Dendritic cell treated with granulocyte-macrophage colony-stimulating factor and Interleukin-4, amounts not matched to agents 40 ng/mL and 50 ng/mL, for 4 days (primary cell): ENCODE measurements at regions of chr3 and their contacts with region 1.

Region 1: DNA sequence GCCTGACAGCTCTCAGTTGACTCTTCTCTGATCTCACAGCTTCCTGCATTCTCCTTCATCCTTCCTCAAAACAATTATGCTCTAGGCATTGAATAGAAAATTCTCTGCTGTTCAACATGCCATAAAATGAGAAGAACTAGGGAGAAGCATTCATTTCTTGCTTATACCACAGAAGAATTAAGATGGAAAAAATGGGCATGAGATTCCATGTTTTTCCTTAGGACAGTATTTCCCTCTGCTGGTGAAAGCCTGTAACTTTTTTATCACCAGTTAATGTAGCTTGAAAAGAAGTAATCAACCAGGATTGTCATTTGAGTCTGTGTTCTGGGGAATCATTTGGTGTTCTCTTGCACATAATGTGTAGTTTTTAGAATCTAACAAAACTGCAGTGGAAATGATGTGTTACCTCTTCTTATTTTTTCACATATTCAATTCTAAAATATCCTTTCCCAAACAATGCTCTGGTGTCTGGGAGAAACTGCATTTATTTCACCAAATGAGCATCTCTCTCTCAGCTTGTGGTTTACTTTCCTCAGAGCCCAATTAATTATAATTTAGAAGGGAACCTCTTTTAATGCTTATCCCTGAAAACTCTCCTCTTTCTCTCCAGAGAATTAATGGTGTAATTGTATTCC is 92.8 kb upstream of the DCBLD2 start:
- H3K4me3 Mint-ChIP-seq: no peak overlapping the region
- H3K27ac Mint-ChIP-seq: no peak overlapping the region
- H3K4me1 Mint-ChIP-seq: no peaks in the 10 kb centered on the region
- H3K27me3 Mint-ChIP-seq: no peaks in the 10 kb centered on the region

Region 2: DNA sequence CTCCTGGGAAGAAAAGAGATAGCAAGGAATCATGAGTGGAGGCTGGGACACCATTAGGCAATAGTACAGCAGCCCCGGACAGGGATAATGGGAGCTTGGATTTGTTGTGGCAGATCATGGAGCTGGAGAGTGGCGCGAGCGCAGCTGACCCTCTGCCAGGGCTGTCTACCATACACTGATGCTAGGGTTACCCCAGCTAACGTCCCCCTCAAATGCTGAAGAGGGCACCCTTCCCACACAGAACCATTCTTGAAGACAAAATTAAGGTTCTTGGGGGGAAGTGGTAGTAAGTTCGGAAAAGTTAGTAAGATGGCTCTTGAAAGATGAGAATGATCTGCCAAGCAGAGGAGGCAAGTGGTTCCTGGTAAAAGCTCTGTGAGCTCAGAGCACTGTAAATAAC is 170.0 kb before region 1 on chr3:
- intact Hi-C with region 1: loop called (anchors 5 kb)
- H3K4me3 Mint-ChIP-seq: no peak overlapping the region
- H3K27ac Mint-ChIP-seq: no peak overlapping the region
- H3K4me1 Mint-ChIP-seq: no peaks in the 10 kb centered on the region
- H3K27me3 Mint-ChIP-seq: no peaks in the 10 kb centered on the region

Region 3: GRCh38 chr3:98893740-98894139 is 100.5 kb before region 1 on chr3:
- intact Hi-C with region 1: no loop called
- H3K4me3 Mint-ChIP-seq: no peak overlapping the region
- H3K27ac Mint-ChIP-seq: no peak overlapping the region
- H3K4me1 Mint-ChIP-seq: peaks cover 6% of the 10 kb centered on the region
- H3K27me3 Mint-ChIP-seq: no peaks in the 10 kb centered on the region

Region 4: DNA sequence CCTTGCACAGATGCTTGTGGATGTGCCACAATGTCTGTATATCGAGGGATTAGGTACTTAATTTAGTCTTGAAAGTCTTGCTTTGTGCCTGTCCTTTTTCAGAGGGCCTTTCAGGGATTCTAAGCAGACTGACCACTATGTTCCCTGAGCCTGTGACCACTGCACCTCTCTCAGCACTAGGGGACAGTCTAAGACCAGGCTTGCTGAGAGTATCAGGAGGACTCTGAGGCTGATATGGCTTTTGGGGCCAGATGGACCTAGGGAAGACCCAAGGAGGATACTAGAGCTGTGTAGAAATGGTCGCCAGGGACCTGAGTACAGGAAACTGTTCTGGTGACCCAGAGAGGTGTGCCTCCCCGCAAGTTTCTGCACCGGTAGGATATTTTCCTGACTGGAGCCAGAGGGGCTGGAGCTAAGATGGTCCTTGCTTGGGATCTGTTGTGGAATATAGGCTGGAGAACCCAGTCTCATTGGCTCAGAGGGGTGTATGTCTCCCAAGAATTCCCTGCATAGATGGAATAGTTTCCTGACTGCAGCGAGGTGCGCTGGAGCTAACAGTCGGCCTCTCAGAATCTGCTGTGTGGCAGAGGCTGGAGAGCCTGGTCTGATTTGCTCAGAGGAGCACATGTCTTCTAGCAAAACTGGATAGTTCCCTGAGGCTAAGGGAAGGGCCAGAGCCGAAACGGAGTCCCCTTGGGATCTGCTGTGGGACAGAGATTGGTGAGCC is 120.5 kb after region 1 on chr3:
- intact Hi-C with region 1: no loop called
- H3K4me3 Mint-ChIP-seq: no peak overlapping the region
- H3K27ac Mint-ChIP-seq: no peak overlapping the region
- H3K4me1 Mint-ChIP-seq: no peaks in the 10 kb centered on the region
- H3K27me3 Mint-ChIP-seq: no peaks in the 10 kb centered on the region